ENCODE measurements at regions of chr18 and their contacts with region 1.

Region 1: DNA sequence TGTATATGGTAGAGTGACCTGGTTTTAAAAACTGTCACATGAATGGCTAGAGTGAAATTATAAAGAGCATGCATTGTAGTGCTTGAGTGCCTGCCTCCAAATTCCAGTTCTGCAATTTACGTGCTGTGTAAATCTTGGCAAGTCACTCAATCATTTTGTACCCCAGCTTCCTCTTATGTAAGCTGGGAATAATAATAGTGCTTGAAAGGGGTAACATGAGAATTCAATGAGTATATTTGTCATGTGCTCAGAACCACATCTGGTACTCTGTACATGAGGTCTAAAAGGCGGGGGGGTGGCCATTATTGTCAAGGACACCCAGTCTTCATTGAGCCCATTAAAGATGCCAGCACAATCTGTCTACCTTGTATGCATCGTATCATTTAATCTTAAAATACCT is 214.8 kb downstream of the MC4R start:
- DNase-seq: no peak
- H3K4me3 ChIP-seq: no peak overlapping the region
- H3K27ac ChIP-seq: no peak overlapping the region
- H3K4me1 ChIP-seq: no peaks in the 10 kb centered on the region
- H3K27me3 ChIP-seq: peaks cover 4% of the 10 kb centered on the region
- CTCF ChIP-seq: no peak

Region 2: DNA sequence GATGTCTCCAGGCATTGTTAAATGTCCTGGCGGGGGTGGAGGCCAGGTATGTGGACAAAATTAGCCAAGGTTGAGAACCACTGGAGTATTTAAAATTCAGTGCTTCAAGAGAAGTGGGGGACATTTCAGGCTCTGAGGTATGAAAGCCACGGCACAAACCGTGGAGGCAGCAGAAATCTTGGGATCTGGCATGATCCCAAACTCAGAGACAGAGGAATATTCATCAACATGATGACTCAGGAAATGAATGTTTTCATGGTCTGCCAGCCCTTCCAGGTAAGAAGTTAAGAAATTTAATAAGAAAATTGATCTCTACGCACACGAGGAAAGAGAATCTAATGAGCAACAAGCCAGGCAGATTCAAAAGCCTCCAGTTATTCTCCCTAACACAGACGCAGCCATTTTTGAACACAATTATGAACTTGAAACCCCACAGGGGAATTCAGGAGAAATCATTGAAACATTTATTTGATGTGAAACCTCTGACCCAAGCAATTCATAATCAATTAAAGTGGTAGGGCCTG is 949.1 kb before region 1 on chr18:
- CTCF ChIA-PET with region 1: no interaction called
- POLR2A ChIA-PET with region 1: no interaction called
- intact Hi-C with region 1: no loop called
- DNase-seq: peak; percentile 84
- H3K4me3 ChIP-seq: no peak overlapping the region
- H3K27ac ChIP-seq: peak overlapping the region; percentile 89
- H3K4me1 ChIP-seq: peaks cover 52% of the 10 kb centered on the region
- H3K27me3 ChIP-seq: no peaks in the 10 kb centered on the region
- CTCF ChIP-seq: no peak

Region 3: DNA sequence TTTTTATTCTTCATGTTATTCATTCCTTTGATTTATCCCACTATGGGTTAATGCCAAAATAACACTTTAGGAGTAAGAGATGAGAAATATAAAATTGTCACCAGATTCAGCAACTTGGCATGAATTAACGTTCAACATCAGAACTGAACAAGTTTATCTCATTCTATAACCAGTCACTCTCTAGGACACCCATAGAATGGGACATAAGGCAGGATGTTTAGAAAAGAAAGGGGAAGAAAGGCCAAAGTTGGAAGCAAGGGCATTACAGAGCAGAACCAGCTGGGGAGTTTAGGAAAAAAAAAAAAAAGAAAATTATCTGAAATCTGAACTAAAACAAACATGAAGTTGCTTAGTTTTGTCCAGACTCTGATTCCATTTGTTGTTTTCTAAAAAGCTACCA is 47.0 kb before region 1 on chr18:
- CTCF ChIA-PET with region 1: no interaction called
- POLR2A ChIA-PET with region 1: no interaction called
- intact Hi-C with region 1: no loop called
- DNase-seq: no peak
- H3K4me3 ChIP-seq: no peak overlapping the region
- H3K27ac ChIP-seq: no peak overlapping the region
- H3K4me1 ChIP-seq: no peaks in the 10 kb centered on the region
- H3K27me3 ChIP-seq: no peaks in the 10 kb centered on the region
- CTCF ChIP-seq: no peak

Region 4: DNA sequence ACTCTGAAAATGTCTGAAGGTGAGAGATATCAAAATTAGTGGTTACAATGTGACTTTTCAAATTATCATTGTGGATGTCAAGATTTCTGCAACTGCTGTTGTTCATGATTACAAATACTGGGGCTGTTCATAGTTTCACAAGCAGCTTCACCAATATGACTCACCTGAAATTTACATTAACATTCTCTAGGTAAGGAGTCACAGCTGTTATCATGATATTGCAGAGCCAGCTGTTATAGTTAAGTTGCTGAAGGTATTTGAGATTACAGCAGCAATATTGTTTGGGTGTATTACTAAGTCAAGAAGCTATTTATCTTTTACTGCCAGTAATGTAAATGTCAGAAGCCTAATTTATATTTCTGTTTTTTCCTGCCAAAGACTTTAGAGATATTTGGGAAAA is 74.7 kb after region 1 on chr18:
- CTCF ChIA-PET with region 1: no interaction called
- POLR2A ChIA-PET with region 1: interaction called, 12 read pairs
- intact Hi-C with region 1: no loop called
- DNase-seq: no peak
- H3K4me3 ChIP-seq: no peak overlapping the region
- H3K27ac ChIP-seq: no peak overlapping the region
- H3K4me1 ChIP-seq: no peaks in the 10 kb centered on the region
- H3K27me3 ChIP-seq: peaks cover 64% of the 10 kb centered on the region
- CTCF ChIP-seq: no peak

Measured in A673 (cell line).